Endothelial cell of umbilical vein (primary cell): ENCODE measurements at regions of chr1 and their contacts with region 1.

Region 1: GRCh38 chr1:52665006-52665941 is 32.3 kb downstream of the SHISAL2A start:
- DNase-seq: no peak
- H3K4me3 ChIP-seq: no peak overlapping the region
- H3K27ac ChIP-seq: no peak overlapping the region
- H3K4me1 ChIP-seq: no peaks in the 10 kb centered on the region
- H3K27me3 ChIP-seq: peaks cover 0 to 2% of the 10 kb centered on the region in 2 experiments
- CTCF ChIP-seq: no peak
- POLR2A ChIP-seq: no peak

Region 2: DNA sequence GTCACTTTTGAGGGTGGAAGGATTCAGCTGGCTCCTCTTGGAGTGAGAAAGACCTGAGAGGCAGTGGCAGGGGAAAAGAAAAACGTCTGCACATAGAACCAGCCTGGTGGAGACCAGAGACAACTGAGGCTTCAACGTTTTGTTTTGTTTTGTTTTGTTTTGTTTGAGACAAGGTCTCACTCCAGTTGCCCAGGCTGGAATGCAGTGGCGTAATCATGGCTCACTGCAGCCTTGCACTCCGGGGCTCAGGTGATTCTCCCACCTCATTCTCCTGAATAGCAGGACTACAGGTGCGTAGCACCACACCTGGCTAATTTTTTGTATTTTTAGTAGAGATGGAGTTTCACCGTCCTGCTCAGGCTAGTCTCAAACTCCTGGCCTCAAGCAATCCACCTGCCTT is 20.0 kb before region 1 on chr1:
- CTCF ChIA-PET with region 1: no interaction called
- POLR2A ChIA-PET with region 1: no interaction called
- dilution Hi-C with region 1: no loop called
- intact Hi-C with region 1: no loop called
- DNase-seq: no peak
- H3K4me3 ChIP-seq: no peak overlapping the region
- H3K27ac ChIP-seq: no peak overlapping the region
- H3K4me1 ChIP-seq: no peaks in the 10 kb centered on the region
- H3K27me3 ChIP-seq: peaks cover 1 to 3% of the 10 kb centered on the region in 2 experiments
- CTCF ChIP-seq: no peak
- POLR2A ChIP-seq: no peak

Region 3: GRCh38 chr1:52733368-52733767 is 68.1 kb after region 1 on chr1:
- CTCF ChIA-PET with region 1: no interaction called
- POLR2A ChIA-PET with region 1: no interaction called
- dilution Hi-C with region 1: no loop called
- intact Hi-C with region 1: loop called (anchors 2 kb)
- DNase-seq: no peak
- H3K4me3 ChIP-seq: no peak overlapping the region
- H3K27ac ChIP-seq: no peak overlapping the region
- H3K4me1 ChIP-seq: no peaks in the 10 kb centered on the region
- H3K27me3 ChIP-seq: no peaks in the 10 kb centered on the region
- CTCF ChIP-seq: no peak
- POLR2A ChIP-seq: no peak

Region 4: GRCh38 chr1:52769346-52770033 is 104.2 kb after region 1 on chr1:
- CTCF ChIA-PET with region 1: no interaction called
- POLR2A ChIA-PET with region 1: no interaction called
- dilution Hi-C with region 1: no loop called
- intact Hi-C with region 1: no loop called
- DNase-seq: no peak
- H3K4me3 ChIP-seq: no peak overlapping the region
- H3K27ac ChIP-seq: no peak overlapping the region
- H3K4me1 ChIP-seq: no peaks in the 10 kb centered on the region
- H3K27me3 ChIP-seq: no peaks in the 10 kb centered on the region
- CTCF ChIP-seq: no peak
- POLR2A ChIP-seq: no peak